Dorsolateral prefrontal cortex (tissue), 120 donors: ENCODE measurements at regions of chr1 and their contacts with region 1.

Region 1: GRCh38 chr1:171801487-171801891 is 20.0 kb downstream of the METTL13 start:
- DNase-seq: peak in 2 of 10 donors; percentile 10 to 38
- H3K4me3 ChIP-seq: no peak overlapping the region
- H3K27ac ChIP-seq: peak overlapping the region in 35 of 59 donors; percentile 3 to 76 (median 53)
- H3K27me3 ChIP-seq: no peaks in the 10 kb centered on the region
- CTCF ChIP-seq: peak; percentile 64 to 96 (median 88)

Region 2: DNA sequence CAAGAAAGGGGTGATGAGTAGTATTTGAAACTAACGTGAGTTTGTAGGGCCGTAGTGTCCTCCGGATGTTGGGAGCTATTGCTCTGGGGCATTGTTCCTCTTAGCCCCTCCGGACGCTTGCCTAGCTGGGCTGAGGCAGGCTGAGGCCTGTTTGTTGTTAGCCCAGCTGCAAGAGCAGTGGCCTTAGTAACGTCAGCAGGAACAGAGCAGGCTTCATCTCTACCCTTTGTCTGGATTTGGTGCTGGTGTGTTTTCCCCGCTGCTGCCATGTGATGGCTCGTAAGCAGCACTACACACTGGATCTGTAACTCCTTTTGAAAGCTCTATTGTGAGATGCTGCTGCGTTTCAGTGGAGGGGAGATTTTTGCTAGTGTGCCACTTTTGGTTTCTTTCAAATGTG is 97.5 kb after region 1 on chr1:
- intact Hi-C with region 1: loop called (anchors 5 kb)
- DNase-seq: peak; percentile 38 to 92 (median 86)
- H3K4me3 ChIP-seq: peak overlapping the region in 58 of 59 donors; percentile 1 to 69 (median 42)
- H3K27ac ChIP-seq: peak overlapping the region; percentile 62 to 100 (median 95)
- H3K27me3 ChIP-seq: no peaks in the 10 kb centered on the region
- CTCF ChIP-seq: peak in 23 of 56 donors; percentile 9 to 46 (median 18)

Region 3: DNA sequence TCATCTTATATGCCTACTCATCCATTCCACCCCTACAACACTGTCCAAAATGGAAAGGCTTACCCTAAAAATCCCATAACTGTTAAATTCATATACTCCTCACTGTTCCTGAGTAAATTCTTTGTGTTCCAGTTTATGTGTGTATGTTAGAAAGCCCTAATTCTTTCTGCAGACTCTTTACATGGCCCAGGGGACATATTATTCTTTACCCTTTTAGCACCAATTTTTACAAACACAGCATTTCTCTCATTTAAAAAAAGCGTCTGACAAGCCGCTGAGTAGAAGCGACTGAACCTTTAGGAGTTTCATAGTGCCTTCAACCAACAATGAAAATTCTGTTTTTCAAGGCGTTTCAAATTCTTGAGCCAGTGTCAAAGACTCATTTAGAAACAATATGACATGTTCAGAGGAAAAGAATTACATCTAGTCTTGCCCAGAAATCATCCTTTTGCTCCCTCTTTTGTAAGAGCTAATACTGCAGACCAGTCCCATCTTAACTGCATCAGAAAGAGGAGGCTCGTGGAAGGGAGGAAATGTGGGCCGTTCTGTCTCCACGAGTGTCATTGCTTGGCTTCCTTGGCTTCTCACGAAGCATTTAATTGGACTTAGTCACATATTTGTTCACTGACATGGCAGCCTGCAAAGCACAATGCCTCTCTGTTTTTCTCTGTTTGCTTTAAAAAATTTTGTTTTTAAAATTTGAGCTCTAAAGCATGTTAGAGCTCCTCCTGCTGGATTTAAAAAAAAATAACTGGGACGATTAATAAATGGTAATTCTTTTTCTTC is 597.7 kb after region 1 on chr1:
- intact Hi-C with region 1: loop called in 1 of 2 experiments (anchors 10 kb)
- DNase-seq: peak in 6 of 10 donors; percentile 41 to 69 (median 56)
- H3K4me3 ChIP-seq: peak overlapping the region in 49 of 59 donors; percentile 4 to 56 (median 29)
- H3K27ac ChIP-seq: peak overlapping the region; percentile 58 to 95 (median 89)
- H3K27me3 ChIP-seq: no peaks in the 10 kb centered on the region
- CTCF ChIP-seq: peak; percentile 59 to 92 (median 78)

Region 4: GRCh38 chr1:172443626-172444453 is 642.4 kb after region 1 on chr1 and contains the start of gene PIGC:
- intact Hi-C with region 1: loop called in 1 of 2 experiments (anchors 5 kb)
- DNase-seq: peak; percentile 84 to 93 (median 90)
- H3K4me3 ChIP-seq: peak within 1 kb of the TSS; percentile 67 to 99 (median 92)
- H3K27ac ChIP-seq: peak within 1 kb of the TSS in 52 of 59 donors; percentile 18 to 91 (median 67)
- H3K27me3 ChIP-seq: no peaks in the 10 kb centered on the region
- CTCF ChIP-seq: peak; percentile 74 to 96 (median 90)
- total RNA-seq, gene PIGC: 10.6 to 22.8 (median 16.0) TPM